PC-9 (cell line): ENCODE measurements at regions of chr18 and their contacts with region 1.

Region 1: DNA sequence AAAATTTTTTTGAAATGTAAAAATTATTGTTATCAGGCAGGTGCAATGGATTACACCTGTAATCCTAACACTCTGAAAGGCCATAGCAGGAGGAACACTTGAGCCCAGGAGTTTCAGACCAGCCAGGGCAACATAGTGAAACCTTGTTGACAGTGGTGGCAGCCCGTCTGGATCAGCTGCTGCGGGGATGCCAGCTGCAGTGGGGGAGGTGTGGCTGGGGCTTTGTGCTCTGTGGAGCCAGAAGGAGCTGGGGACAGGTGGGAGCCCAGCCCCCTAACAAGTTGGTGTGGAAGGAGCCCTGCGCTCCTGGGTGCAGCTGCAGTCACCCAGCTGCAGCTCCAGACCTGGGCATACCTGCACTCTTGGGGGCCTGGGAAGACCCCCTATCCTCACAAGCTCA is 182.4 kb upstream of the MC4R start:
- DNase-seq: no peak
- H3K4me3 ChIP-seq: no peak overlapping the region
- H3K27ac ChIP-seq: no peak overlapping the region
- H3K4me1 ChIP-seq: no peaks in the 10 kb centered on the region
- H3K27me3 ChIP-seq: no peaks in the 10 kb centered on the region
- CTCF ChIP-seq: no peak

Region 2: DNA sequence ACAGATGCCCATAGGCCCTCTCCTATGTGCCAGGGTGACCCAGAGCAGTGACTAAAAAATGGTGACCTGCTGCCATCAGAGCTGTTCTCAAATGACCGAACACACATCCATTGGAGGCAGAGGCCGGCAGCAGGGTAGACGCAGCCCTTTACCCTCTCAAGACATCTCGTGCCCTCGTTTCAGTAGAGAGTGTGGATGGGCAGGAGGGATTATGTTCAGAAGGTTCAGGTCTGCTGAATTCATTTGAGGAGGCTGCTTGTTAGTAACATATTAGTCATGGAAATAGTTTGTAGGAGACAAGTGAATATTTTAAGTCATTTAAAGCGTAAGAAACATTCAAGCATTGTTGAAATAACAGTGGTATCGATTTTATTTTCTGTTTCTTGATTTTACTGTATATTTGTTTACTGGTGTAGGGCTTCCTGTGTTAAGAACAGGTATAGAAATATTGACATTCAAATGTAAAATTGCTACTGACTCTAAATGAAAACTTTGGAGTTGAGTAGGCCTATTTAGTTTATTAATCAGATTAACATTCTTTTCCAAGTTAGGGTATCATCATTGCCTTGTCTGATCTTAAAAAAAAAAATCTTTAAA is 1607.7 kb before region 1 on chr18:
- CTCF ChIA-PET with region 1: no interaction called
- POLR2A ChIA-PET with region 1: no interaction called
- intact Hi-C with region 1: no loop called
- DNase-seq: no peak
- H3K4me3 ChIP-seq: no peak overlapping the region
- H3K27ac ChIP-seq: no peak overlapping the region
- H3K4me1 ChIP-seq: peaks cover 7% of the 10 kb centered on the region; the same call in 1 of the 2 replicates
- H3K27me3 ChIP-seq: no peaks in the 10 kb centered on the region
- CTCF ChIP-seq: no peak

Region 3: DNA sequence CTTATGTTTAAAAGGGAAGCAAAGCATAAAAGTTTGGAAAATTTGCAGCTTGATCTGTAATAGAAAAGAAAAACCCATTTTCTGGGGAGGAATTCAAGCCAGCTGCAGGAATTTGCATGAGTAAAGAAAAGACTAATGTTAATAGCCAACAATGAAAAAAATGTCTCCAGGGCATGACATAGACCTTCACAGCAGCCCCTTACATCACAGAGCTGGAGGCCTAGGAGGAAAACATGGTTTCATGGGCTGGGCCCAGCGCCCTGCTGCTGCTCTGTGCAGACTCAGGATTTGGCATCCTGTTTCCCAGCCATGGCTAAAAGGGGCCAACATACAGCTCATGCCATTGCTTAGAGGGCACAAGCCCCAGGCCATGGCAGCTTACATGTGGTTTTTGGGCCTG is 229.2 kb after region 1 on chr18:
- CTCF ChIA-PET with region 1: no interaction called
- POLR2A ChIA-PET with region 1: interaction called, 15 read pairs
- intact Hi-C with region 1: no loop called
- DNase-seq: no peak
- H3K4me3 ChIP-seq: no peak overlapping the region
- H3K27ac ChIP-seq: no peak overlapping the region
- H3K4me1 ChIP-seq: no peaks in the 10 kb centered on the region
- H3K27me3 ChIP-seq: no peaks in the 10 kb centered on the region
- CTCF ChIP-seq: no peak